Ovary (tissue), 10 donors: ENCODE measurements at regions of chr6 and their contacts with region 1.

Region 1: DNA sequence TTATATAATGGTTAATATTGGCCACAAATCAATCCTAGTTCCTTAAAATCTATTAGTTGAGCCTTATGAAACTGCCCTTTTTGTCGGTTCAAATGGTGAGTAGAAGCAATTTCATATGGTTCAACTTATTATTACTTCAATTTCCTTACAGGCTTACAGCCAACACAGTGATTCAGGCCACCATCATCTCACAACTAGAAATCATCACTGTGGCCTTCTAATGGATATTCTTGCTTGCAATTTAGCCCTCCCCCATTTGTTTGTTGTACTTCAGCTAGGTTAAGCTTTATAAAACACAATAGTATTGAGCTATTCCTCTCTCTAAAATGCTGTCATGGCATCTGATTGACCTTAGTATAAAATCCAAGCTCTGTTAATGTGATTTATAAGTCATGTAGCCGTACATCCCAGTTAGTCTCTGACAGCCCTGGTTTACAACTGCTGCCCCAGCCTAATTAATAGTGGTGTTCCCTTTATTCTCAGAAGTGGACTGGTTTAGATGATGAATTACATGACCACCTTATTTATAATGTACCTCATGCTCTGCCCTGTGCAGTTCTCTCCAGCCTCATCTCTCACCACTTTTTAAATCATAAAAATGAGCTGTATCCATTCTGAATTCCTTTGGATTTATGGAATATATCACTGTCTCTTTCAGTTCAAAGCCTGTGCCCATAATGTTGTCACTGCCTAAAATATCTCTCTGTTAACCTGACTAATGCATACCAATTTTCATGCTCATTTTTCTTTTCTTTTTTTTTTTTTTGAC is 36.7 kb downstream of the LAMA2 start:
- DNase-seq: no peak
- H3K4me3 ChIP-seq: no peak overlapping the region
- H3K27ac ChIP-seq: no peak overlapping the region
- H3K4me1 ChIP-seq: peaks cover 2% of the 10 kb centered on the region
- H3K27me3 ChIP-seq: no peaks in the 10 kb centered on the region
- CTCF ChIP-seq: no peak
- EP300 ChIP-seq: no peak
- POLR2A ChIP-seq: no peak

Region 2: DNA sequence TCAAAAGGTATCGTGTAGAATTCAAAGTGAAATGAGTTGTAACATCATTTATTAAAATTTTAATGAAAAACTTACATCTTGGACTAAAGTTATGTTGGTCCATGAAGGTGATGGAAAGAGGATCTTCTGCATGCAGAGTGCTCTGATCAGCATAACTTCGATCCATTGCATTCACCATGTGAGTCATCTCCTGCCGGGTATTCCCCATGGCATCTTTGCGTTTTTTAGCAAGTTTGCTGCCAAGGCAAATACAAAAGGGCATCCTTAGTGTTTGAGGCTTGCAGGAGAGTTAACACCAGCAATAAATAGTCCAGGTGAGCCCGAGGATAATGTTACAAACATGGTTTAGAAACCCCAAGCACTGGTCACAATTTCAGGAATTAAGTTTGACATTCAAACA is 914.6 kb before region 1 on chr6:
- intact Hi-C with region 1: loop called in 1 of 4 experiments (anchors 5 kb)
- DNase-seq: no peak
- H3K4me3 ChIP-seq: no peak overlapping the region
- H3K27ac ChIP-seq: no peak overlapping the region
- H3K4me1 ChIP-seq: no peaks in the 10 kb centered on the region
- H3K27me3 ChIP-seq: no peaks in the 10 kb centered on the region
- CTCF ChIP-seq: no peak
- EP300 ChIP-seq: no peak
- POLR2A ChIP-seq: no peak

Region 3: GRCh38 chr6:128520436-128521281 is 398.9 kb before region 1 on chr6 and contains the start of gene PTPRK:
- intact Hi-C with region 1: loop called in 1 of 4 experiments (anchors 10 kb)
- DNase-seq: peak; percentile 92 to 96 (median 94)
- H3K4me3 ChIP-seq: peak within 1 kb of the TSS; percentile 75
- H3K27ac ChIP-seq: peak within 1 kb of the TSS; percentile 94 to 95
- H3K4me1 ChIP-seq: peaks cover 2% of the 10 kb centered on the region
- H3K27me3 ChIP-seq: no peaks in the 10 kb centered on the region
- CTCF ChIP-seq: peak; percentile 41 to 92 (median 90)
- EP300 ChIP-seq: no peak
- POLR2A ChIP-seq: peak; percentile 92
- total RNA-seq, gene PTPRK: 39.9 to 50.7 (median 45.7) TPM

Region 4: GRCh38 chr6:128554302-128554701 is 365.3 kb before region 1 on chr6:
- intact Hi-C with region 1: no loop called
- DNase-seq: no peak
- H3K4me3 ChIP-seq: no peak overlapping the region
- H3K27ac ChIP-seq: no peak overlapping the region
- H3K4me1 ChIP-seq: no peaks in the 10 kb centered on the region
- H3K27me3 ChIP-seq: no peaks in the 10 kb centered on the region
- CTCF ChIP-seq: no peak
- EP300 ChIP-seq: no peak
- POLR2A ChIP-seq: no peak

Region 5: GRCh38 chr6:129162605-129163004 is 243.0 kb after region 1 on chr6:
- intact Hi-C with region 1: no loop called
- DNase-seq: no peak
- H3K4me3 ChIP-seq: no peak overlapping the region
- H3K27ac ChIP-seq: no peak overlapping the region
- H3K4me1 ChIP-seq: no peaks in the 10 kb centered on the region
- H3K27me3 ChIP-seq: no peaks in the 10 kb centered on the region
- CTCF ChIP-seq: no peak
- EP300 ChIP-seq: no peak
- POLR2A ChIP-seq: no peak